ENCODE measurements at regions of chr6 and their contacts with region 1.

Region 1: GRCh38 chr6:44096612-44097011 is 30.6 kb downstream of the MRPL14 start:
- DNase-seq: no peak
- H3K4me3 ChIP-seq: no peak overlapping the region
- CTCF ChIP-seq: peak; percentile 86

Region 2: GRCh38 chr6:43937236-43938164 is 159.1 kb before region 1 on chr6:
- CTCF ChIA-PET with region 1: no interaction called
- POLR2A ChIA-PET with region 1: no interaction called
- DNase-seq: no peak
- H3K4me3 ChIP-seq: no peak overlapping the region
- CTCF ChIP-seq: no peak

Region 3: DNA sequence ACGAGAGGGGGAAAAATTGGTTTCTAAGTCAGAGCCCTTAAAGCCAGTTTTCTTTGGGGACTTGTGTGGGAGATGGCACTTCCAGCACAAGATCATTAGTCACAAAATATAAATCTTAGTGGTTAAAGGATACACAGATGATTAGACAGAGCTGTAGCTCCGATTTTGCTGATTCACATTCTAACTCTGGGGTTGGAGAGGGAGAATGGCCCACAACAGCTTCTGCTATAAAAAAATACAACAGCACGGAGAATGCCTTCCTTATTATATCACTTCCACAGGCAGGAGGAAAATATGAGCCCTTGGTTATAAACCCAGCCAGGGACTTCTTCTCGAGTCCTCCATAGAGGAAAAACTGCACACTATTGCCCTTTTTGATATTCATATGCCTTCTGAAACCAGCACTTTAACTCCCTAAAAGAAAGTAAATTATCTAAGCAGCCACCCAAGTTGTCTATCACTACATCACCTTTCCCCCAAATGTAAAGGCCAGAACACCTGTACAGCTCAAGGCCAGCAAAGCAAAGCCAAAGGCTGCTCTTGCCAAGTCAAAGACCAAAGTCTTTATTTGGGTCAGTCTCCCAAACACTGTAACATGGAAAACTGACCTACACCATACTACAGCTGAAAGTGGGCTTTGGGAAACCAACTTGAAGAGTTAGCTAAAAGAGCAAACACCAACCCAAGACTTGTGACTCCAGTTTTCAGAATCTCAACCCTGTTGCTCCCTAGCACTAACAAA is 20.2 kb after region 1 on chr6:
- CTCF ChIA-PET with region 1: interaction called, 196 read pairs
- POLR2A ChIA-PET with region 1: interaction called, 4 read pairs
- DNase-seq: peak; percentile 74
- H3K4me3 ChIP-seq: peak overlapping the region; percentile 19; the same call in 1 of the 2 replicates
- CTCF ChIP-seq: no peak

Region 4: DNA sequence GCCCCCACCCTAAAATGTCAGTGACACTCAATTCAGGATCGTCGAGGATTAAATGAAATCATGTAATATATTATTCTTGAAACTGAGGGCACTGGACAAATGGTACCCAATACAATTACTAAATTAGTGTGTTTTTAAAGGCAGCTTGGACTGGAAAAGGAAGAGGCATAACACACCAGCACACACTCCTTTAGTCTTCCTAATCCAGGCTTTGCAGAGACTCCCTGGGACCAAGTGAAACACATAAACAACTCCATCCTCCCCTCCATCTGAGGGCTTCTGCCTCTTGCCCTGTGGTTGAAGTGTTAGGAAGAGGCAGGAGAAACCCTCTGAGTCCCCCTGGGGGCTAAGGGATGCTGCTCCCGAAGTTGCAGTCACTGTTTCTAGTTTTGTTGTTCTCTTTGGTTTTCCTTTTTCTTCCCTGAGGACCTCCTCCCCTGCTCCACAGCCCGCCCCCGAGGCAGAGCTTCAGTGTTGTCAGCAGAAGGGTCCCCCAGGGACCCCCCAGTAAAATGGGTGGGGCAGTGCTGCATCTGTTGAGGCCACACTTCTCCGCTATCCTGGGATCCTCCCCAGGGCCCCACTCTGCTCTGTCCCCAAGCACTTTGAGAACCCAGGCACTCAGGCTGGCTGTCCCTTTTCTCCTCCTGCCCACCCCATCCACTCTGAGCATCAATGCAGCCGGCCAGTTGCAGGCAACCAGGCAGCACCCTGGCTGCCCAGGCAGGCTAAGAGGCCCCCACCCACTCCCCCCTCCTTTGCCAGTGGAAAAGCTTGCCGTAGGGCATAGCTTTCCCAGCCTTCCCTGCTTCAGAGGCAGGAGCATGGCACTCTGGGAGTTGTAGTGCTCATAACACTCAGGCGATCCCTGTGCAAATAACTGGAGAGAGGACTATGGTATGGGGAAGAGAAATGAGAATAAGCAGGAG is 36.7 kb after region 1 on chr6:
- CTCF ChIA-PET with region 1: interaction called, 10 read pairs
- POLR2A ChIA-PET with region 1: no interaction called
- DNase-seq: no peak
- H3K4me3 ChIP-seq: no peak overlapping the region
- CTCF ChIP-seq: peak; percentile 7

Region 5: GRCh38 chr6:44151348-44152108 is 54.9 kb after region 1 on chr6:
- CTCF ChIA-PET with region 1: interaction called, 142 read pairs
- POLR2A ChIA-PET with region 1: no interaction called
- DNase-seq: no peak
- H3K4me3 ChIP-seq: no peak overlapping the region
- CTCF ChIP-seq: peak; percentile 99

Region 6: GRCh38 chr6:44161997-44162338 is 65.4 kb after region 1 on chr6:
- CTCF ChIA-PET with region 1: interaction called, 142 read pairs
- POLR2A ChIA-PET with region 1: no interaction called
- DNase-seq: no peak
- H3K4me3 ChIP-seq: no peak overlapping the region
- CTCF ChIP-seq: no peak

Region 7: DNA sequence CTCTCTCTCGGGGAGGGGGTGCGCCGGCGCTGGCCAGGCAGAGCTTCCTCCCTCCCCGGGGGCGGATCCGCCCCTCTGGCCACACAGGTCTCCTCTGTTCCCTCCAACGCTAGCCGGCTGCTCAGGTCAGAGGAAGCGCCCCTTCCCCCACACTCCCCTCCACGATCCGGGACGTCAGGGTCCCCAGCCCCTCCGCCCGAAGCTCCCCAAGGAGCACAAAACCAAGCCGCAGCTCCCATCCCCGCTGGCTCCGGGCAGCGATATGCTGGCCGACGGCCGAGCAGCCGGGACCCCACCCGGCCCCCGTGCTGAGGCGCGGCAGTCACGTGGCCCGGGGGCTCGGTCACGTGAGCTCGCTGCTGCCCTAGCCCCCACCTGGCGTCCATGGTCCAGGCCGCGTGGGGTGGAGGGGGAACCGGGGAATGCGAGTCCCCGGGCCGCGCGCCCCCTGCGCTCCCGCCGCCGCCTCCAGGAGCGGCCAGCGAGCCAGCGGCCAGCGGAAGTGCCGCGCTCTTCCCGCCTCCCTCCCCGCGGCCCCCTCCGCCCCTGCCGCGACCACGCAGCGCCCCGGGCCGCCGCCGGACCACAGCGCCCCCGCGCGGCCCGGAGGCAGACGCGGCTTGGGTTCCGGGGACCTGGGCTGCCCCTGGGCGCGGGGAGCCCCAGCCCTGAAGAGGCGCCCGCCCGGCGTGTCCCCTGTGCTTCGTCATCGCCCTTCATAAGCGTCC is 160.6 kb after region 1 on chr6 and contains the start of gene SLC35B2:
- CTCF ChIA-PET with region 1: interaction called, 28 read pairs
- POLR2A ChIA-PET with region 1: no interaction called
- DNase-seq: no peak
- H3K4me3 ChIP-seq: peak within 1 kb of the TSS; percentile 88
- CTCF ChIP-seq: peak; percentile 54

Region 8: DNA sequence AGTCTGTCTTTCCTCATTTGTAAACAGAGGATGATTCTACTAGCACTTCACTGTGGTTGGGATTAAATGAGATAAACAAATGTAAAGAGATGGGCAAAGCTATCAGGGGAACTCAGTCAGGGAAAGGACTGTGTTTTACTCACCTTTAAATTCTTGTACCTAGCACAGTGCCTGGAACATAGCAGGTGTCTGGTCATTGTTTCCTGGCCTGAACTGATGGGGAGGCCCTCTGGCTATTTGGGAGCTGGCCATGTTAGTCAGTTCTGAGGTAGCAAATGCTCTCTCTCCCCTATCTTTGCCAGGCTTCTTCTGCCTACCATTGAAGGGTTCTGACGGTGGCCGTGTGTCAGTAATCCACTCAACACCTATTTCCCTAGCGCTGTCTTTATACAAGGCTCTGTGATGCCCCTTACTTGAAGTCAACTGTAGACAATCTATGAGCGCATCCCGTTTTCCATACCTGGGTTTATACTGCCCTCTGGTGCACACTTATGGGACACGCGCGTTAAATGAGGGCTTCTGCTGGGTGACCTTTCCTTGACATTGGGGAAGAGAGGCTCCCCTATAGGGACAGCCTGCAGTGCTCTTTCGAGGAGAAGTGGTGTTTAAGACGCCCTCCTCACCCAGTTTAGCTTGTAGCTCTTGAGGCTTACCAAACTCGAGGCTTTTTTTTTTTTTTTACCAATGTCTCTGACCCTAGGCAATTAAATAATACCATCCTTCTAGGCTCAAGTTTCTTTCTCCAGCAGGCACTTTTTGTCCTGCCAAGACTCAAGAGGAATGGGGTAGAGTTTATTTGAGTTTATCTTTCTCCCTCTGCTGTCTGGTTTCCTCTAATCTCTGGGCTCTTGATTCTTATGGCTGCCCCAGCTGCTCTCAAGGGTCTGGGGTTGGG is 241.9 kb after region 1 on chr6:
- CTCF ChIA-PET with region 1: interaction called, 44 read pairs
- POLR2A ChIA-PET with region 1: no interaction called
- DNase-seq: no peak
- H3K4me3 ChIP-seq: no peak overlapping the region
- CTCF ChIP-seq: peak; percentile 75

Measured in AG04449 (cell line).